Activated CD4-positive, alpha-beta T cell treated with anti-CD3 and anti-CD28 coated beads for 36 hours (primary cell): ENCODE measurements at regions of chr1 and their contacts with region 1.

Region 1: GRCh38 chr1:11735854-11736745 is at the start of gene AGTRAP:
- DNase-seq: peak; percentile 95
- ATAC-seq: peak; percentile 81
- H3K4me3 Mint-ChIP-seq: peak within 1 kb of the TSS; percentile 87
- H3K27ac Mint-ChIP-seq: peak within 1 kb of the TSS; percentile 82
- H3K4me1 Mint-ChIP-seq: peaks cover 56% of the 10 kb centered on the region
- H3K27me3 Mint-ChIP-seq: no peaks in the 10 kb centered on the region
- total RNA-seq, gene AGTRAP: 13.2 to 13.3 TPM

Region 2: GRCh38 chr1:11059990-11060830 is 675.9 kb before region 1 on chr1 and contains the start of gene SRM:
- CTCF ChIA-PET with region 1: no interaction called
- POLR2A ChIA-PET with region 1: no interaction called
- intact Hi-C with region 1: loop called in 1 of 2 experiments (anchors 5 kb)
- DNase-seq: peak; percentile 95
- ATAC-seq: peak; percentile 98
- H3K4me3 Mint-ChIP-seq: peak within 1 kb of the TSS; percentile 93
- H3K27ac Mint-ChIP-seq: peak within 1 kb of the TSS; percentile 94
- H3K4me1 Mint-ChIP-seq: peaks cover 41% of the 10 kb centered on the region
- H3K27me3 Mint-ChIP-seq: no peaks in the 10 kb centered on the region
- total RNA-seq, gene SRM: 180 to 242 TPM

Region 3: DNA sequence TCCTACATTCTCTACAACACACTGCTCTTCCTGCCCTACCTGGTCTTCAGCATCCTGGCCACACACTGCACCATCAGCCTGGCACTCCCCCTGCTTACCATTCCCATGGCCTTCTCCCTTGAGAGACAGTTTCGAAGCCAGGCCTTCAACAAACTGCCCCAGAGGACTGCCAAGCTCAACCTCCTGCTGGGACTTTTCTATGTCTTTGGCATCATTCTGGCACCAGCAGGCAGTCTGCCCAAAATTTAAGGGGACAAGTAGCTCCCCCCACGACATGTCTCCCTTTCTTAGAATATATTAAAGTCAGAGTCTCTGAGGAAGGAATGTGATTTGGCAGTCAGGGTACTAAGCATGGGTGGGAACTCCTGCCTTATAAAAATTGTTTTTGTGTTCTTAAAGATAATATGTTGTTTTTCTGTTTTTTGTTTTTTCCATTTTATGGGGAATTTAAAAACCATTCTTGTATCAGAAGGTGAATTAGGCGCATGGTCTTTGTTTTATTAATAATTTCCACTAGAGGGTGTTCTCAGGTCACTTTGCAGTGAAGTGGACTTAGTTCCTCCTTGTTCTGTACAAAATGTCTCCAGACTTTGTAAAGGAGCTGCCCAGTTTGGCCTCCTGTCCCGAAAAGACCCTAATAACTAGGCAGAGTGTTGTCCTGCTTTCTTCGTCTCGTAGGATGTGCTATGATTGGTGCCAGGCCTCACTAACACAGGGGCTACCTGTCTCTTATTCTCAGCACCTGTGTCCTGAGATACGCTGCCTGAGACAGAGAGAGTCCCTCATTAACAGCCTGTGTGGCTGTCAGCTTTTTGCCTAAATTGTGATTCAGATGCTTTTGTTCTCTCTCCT is 450.0 kb before region 1 on chr1:
- CTCF ChIA-PET with region 1: no interaction called
- POLR2A ChIA-PET with region 1: no interaction called
- intact Hi-C with region 1: loop called in 1 of 2 experiments (anchors 5 kb)
- DNase-seq: no peak
- ATAC-seq: no peak
- H3K4me3 Mint-ChIP-seq: no peak overlapping the region
- H3K27ac Mint-ChIP-seq: peak overlapping the region; percentile 90
- H3K4me1 Mint-ChIP-seq: peaks cover 83% of the 10 kb centered on the region
- H3K27me3 Mint-ChIP-seq: no peaks in the 10 kb centered on the region

Region 4: DNA sequence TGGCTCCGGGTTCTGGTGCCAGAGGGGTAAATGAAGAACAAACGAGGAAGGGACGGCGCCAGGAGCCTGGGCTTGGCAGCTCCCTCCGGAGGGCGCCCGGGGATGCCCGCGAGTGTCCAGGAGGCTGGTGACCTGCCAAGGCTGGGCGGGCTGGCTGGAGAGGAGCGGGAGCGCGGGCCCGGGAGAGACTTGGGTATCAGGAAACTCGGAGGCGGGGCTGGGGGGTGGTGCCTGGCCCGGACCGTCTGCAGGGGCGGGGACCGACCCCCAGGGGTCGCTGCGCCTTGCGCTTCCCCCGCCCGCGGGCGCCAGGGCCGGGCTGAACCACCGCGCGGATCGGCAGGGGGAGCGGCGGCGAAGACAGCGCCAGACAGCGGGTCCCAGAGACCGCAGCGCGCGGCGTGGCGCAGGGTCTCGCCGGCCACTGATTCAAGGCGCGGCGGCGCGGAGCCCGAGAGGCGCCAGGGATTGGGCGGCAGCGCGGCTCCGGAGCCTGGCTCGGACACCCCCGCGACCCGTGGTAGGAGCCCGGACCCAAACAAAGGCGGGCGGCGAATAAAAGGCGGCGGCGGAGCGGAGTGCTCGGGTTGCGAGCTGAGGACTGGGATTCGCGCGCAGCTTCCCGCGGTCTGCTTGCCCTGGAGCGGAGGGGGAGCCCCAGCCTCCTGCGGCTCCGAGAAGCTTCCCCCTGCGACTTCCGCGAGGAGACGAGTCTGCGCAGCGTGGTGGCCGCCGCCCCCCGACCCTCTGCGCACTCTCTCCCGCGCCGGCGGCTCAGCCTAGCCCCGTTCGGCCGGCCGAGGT is 257.3 kb before region 1 on chr1 and contains the start of gene DISP3:
- CTCF ChIA-PET with region 1: no interaction called
- POLR2A ChIA-PET with region 1: no interaction called
- intact Hi-C with region 1: loop called in 1 of 2 experiments (anchors 2 kb)
- DNase-seq: peak; percentile 89
- ATAC-seq: peak; percentile 89
- H3K4me3 Mint-ChIP-seq: peak within 1 kb of the TSS; percentile 53
- H3K27ac Mint-ChIP-seq: no peak within 1 kb of the TSS
- H3K4me1 Mint-ChIP-seq: peaks cover 5% of the 10 kb centered on the region
- H3K27me3 Mint-ChIP-seq: peaks cover 33% of the 10 kb centered on the region
- total RNA-seq, gene DISP3: 0.55 to 0.58 TPM

Region 5: DNA sequence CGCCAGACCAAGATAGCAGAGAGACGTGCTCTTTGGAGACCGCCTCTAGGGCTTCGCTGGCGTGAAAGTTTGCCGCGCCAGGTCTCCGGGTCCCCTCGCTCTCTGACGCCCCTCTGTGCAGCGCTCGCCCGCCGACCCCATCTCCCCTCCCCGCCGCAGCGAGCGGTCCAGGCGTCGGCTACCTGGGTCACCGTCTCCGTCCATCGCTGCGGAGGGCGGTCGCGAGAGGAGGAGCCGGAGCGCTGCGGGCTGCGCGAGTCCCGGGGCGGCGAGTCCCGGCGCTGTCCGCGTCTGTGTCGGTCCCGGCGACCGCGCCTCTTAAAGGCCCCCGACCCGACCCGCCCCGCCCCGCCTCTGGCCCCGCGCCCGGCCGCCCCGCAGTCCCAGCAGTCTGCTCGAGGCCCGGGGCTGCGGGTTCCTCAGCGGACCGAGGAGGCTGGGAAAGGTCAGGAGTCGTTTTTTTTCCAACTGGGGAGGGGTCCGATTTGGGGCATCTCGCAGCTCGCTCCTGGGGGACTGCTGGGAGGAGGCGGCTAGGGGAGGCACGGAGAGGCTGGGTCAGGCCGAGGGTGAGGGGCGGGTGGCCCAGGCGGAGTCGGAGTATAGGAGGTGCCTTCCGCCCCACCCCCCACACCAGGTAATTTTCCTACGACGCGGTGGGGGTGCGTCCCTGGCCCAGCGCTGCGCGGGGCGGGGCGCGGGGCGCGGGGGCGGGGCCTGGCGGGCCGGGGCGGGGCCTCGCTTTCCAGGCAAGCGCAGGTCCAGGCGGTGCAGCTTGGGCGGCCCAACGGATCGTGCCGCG is 81.8 kb before region 1 on chr1 and contains the starts of genes FBXO2 and FBXO44:
- CTCF ChIA-PET with region 1: interaction called, 17 read pairs
- POLR2A ChIA-PET with region 1: interaction called, 3 read pairs
- intact Hi-C with region 1: loop called in 1 of 2 experiments (anchors 1 kb)
- DNase-seq: peak; percentile 85
- ATAC-seq: peak; percentile 82
- H3K4me3 Mint-ChIP-seq: peak within 1 kb of the TSS; percentile 73
- H3K27ac Mint-ChIP-seq: no peak within 1 kb of the TSS
- H3K4me1 Mint-ChIP-seq: peaks cover 25% of the 10 kb centered on the region
- H3K27me3 Mint-ChIP-seq: no peaks in the 10 kb centered on the region
- total RNA-seq, gene FBXO2: 1.6 to 2.1 TPM
- total RNA-seq, gene FBXO44: 20.2 to 21.8 TPM

Region 6: DNA sequence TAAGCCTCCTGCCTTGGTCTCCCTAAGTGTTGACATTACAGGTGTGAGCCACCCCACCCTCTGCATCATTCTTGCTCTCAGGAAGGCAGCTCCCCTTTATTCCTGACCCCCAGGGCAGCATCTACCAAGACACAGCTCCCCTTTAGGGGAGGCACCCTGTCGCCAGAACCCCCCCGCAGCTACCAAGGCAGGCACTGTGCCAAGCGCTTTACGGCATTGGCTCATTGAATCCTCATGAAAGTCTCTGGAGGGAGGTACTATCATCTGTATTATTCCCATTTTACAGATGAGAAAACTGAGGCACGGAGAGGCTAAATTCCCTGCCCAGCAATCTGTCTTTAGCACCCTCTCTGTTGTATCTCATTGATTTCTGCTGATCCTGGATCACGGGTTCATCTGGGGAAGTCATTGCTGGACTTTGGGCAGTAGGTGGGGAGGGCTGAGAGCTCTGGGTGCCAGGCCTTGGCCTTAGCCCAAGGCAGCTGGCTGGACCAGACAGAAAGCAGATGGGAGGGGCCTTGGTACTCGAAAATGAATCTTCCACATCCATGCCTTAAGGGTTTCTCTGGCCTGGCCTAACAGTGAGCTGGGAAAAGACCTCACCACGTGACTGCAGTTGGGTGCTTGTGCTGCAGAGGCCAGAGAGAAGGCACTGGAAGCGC is 204.3 kb after region 1 on chr1:
- CTCF ChIA-PET with region 1: no interaction called
- POLR2A ChIA-PET with region 1: no interaction called
- intact Hi-C with region 1: no loop called
- DNase-seq: no peak
- ATAC-seq: no peak
- H3K4me3 Mint-ChIP-seq: no peak overlapping the region
- H3K27ac Mint-ChIP-seq: no peak overlapping the region
- H3K4me1 Mint-ChIP-seq: no peaks in the 10 kb centered on the region
- H3K27me3 Mint-ChIP-seq: no peaks in the 10 kb centered on the region

Region 7: GRCh38 chr1:11979851-11980675 is 244.0 kb after region 1 on chr1 and contains the start of gene MFN2:
- CTCF ChIA-PET with region 1: no interaction called
- POLR2A ChIA-PET with region 1: no interaction called
- intact Hi-C with region 1: loop called in 1 of 2 experiments (anchors 1 kb)
- DNase-seq: peak; percentile 96
- ATAC-seq: peak; percentile 93
- H3K4me3 Mint-ChIP-seq: peak within 1 kb of the TSS; percentile 97
- H3K27ac Mint-ChIP-seq: peak within 1 kb of the TSS; percentile 94
- H3K4me1 Mint-ChIP-seq: peaks cover 36% of the 10 kb centered on the region
- H3K27me3 Mint-ChIP-seq: no peaks in the 10 kb centered on the region
- total RNA-seq, gene MFN2: 52.5 to 71.6 TPM